ENCODE measurements at regions of chr6 and their contacts with region 1.

Region 1: DNA sequence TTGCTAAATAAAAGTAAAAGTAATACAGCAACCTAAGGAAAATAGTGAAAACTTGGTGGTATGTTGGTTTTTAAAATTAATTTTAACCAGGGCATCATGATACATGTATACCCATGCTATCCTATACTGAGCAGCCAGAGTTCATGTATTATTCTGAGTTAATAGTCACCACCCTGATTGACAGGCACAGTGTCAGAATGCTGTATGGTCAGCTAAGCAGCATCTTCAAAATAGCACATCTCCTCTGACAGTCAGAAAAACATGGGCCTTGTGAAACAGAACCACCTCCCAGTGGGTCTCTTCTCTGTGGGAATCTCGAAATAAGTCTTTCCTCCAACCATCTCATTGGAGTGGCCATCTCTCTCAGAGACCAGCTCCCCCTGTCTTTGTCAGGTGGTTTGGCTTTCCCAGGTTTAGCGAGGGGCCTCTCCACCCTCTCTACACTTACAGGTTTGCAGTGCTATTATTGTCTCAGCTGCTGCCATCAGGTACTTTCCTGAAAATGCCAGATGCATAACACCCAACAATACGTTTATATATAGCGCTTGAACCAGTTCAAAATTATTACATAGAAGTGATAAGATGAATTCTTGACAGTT is 47.1 kb upstream of the RNF8 start:
- DNase-seq: no peak
- ATAC-seq: no peak

Region 2: GRCh38 chr6:37279366-37280134 is 27.2 kb before region 1 on chr6:
- intact Hi-C with region 1: no loop called
- DNase-seq: no peak
- ATAC-seq: peak; percentile 80

Region 3: DNA sequence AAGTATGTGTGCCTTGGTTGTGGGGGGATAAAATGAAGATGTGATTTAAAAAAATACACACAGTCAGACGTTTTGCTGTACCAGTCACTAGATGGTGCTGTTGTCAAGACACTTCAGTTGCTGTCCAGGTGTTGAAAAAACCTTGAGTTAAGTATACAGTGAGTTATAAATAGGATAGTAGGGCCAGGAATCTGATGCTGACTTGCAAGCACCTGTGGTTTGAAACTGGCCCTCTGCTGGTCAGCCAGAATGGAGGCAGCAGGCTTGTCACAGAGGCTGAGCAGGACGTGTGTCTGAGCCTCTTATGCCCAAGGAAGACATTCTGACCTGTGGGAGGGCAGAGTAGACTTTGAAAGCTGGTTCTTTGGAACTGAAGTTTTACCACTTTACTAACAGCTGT is 74.9 kb after region 1 on chr6:
- intact Hi-C with region 1: loop called (anchors 2 kb)
- DNase-seq: no peak
- ATAC-seq: no peak

Region 4: DNA sequence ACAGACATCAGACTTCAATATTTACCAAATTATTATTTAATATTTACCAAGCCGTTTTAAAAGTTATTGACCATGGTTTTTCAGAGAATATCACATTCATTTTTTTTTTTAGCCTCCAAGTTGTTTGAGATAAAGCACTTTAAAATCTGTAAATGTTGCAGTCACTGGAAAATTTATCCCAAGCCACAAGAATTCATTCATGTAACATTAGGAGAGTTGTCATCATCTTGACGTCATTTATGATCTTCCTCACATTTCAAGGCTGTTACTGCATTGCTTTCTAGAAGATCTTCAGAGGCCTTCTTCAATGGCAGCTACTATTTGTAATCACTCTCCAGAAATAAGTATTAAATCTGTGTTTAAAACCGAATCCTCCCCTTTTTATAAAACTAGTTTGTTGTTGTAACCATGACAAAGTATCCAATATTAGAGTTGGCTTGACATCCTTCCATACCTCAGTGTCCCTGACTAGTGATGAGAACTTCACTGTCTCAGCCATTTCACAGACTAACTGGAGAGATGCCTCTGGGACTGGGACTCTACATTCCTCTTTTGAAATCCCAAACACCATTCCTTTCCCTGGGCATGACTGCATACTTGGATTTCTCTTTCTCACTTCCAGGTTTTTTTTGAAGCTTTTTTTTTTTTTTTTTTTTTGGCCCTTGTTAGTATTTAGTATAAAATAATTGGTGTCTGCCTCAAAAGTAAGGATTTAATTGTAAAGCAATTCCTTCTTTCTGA is 612.9 kb after region 1 on chr6:
- intact Hi-C with region 1: no loop called
- DNase-seq: no peak
- ATAC-seq: no peak

Measured in sciatic nerve (tissue), 2 donors.